GM10248 (cell line): ENCODE measurements at regions of chr10 and their contacts with region 1.

Region 1: GRCh38 chr10:122648599-122649428 is 50.8 kb downstream of the C10orf120 start:
- DNase-seq: peak; percentile 45
- CTCF ChIP-seq: peak; percentile 77

Region 2: GRCh38 chr10:122632031-122632430 is 16.8 kb before region 1 on chr10:
- CTCF ChIA-PET with region 1: interaction called, 12 read pairs
- POLR2A ChIA-PET with region 1: no interaction called
- DNase-seq: no peak
- CTCF ChIP-seq: no peak

Region 3: GRCh38 chr10:122665329-122665860 is 16.6 kb after region 1 on chr10:
- CTCF ChIA-PET with region 1: interaction called, 22 read pairs
- POLR2A ChIA-PET with region 1: no interaction called
- DNase-seq: no peak
- CTCF ChIP-seq: no peak

Region 4: GRCh38 chr10:122674781-122675180 is 26.0 kb after region 1 on chr10:
- CTCF ChIA-PET with region 1: interaction called, 11 read pairs
- POLR2A ChIA-PET with region 1: no interaction called
- DNase-seq: no peak
- CTCF ChIP-seq: no peak

Region 5: DNA sequence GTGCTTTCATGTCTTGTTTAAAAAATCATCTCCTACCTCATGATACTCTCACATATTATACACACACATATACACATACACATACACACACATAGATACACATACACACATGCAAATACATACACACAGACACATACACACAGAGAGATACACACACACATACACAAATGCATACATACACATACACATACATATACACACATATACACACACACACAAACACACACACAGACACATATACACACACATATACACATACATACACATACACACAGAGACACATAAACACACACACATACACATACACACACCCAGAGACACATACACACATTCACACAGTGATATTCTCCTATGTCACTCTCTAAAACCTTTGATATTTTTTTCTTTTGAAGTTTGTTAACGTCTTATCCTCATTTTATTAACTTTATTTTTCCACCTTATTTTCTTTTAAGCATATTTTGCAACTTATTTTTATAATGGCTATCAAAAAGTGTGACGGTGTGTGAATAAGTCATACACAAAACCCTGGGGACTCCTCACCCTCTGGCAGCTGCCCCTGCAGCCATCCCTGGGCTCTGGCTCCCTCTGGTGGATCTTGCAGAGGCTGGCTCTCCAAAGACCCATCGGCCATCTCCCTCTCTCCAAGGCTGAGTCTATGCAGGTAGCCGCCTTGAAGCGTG is 54.8 kb after region 1 on chr10:
- CTCF ChIA-PET with region 1: interaction called, 50 read pairs
- POLR2A ChIA-PET with region 1: no interaction called
- DNase-seq: peak; percentile 76
- CTCF ChIP-seq: peak; percentile 77